ENCODE measurements at regions of chr10 and their contacts with region 1.

Region 1: DNA sequence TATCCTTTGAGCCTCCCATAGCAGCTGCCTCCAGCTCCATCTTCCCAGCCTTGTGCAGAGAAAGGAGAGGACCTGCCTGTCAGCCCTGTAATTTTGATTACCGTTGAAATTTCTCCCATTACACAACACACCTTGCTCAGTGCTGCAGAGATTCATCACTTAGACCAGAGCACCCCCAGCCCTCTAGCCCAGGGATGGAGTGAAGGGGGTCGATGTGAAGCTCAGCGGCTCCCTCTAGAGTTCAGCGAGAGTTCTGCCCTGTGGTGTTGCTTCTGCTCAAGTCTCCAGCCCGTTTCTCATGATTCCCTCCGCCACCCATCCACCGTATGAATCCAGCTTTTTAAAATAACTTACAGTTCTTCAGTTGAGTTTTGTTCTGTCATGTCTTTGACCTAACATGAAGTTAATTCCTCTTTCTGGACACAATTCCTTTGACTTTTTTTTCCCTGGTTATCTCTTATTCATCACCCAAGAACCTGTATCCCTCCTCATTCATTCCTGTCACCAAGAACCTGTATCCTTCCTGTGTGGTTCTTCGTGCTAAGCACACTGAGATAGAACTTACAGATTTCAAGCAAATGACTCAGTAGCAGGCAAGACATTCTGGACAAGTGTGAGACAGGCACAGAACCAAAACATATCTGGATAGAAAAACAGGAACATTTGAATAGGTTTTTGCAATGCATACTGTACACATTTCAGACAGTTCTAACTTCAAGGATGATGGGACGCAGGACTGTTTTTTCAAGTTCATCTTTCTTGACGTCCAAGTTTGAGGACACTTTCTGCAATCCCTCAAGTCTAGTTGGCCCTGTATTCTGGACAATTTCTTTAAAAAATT is 35.0 kb upstream of the ZNF32 start:
- DNase-seq: peak in 2 of 9 experiments; percentile 41 to 49
- ATAC-seq: peak; percentile 68
- H3K4me3 ChIP-seq: no peak overlapping the region
- H3K4me3 Mint-ChIP-seq: no peak overlapping the region
- H3K27ac ChIP-seq: no peak overlapping the region
- H3K27ac Mint-ChIP-seq: no peak overlapping the region
- H3K4me1 ChIP-seq: no peaks in the 10 kb centered on the region
- H3K4me1 Mint-ChIP-seq: peaks cover 1% of the 10 kb centered on the region
- H3K27me3 ChIP-seq: no peaks in the 10 kb centered on the region
- H3K27me3 Mint-ChIP-seq: peaks cover 25% of the 10 kb centered on the region
- CTCF ChIP-seq: peak; percentile 58

Region 2: DNA sequence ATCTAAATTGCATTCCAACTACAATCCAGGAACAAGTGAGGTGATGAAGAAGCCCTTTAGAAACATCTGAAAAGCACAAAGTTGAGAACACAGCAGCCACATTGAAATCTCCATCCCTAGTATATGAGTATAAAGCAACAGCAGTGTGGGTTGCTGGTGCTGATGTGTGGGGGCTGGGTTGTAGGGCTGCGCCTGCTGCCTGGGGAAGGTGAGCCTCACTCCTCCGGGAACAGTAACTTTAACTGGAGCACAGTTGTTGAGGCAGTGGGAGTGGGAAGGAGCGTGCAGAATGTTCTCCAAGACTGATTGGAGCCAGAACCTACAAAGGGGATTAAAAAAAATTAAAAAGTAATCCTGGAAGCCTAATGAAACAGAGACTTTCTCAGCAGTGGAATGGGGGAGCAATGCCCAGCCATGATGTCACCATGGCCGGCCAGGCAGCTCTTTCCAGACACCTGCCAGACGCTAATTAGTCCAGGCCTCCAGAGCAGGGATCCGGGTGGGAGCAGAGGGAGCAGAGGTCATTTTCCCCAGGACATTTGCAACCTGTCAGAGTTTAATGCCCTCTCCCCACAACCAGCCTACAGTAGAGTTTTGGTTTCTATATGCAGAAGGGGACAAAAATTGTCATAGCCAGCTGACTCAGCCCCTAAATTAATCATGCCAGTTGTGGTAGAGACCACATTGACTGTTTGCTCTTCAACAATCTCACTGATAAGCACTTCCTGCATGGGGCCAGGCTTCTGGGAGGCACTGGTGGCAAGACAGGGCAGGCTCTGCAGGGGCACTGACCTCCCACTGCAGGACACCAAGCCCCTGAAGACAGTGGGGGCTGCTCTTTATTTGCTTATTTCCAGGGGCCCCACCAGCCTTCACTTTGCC is 98.0 kb after region 1 on chr10:
- CTCF ChIA-PET with region 1: no interaction called
- POLR2A ChIA-PET with region 1: no interaction called
- intact Hi-C with region 1: no loop called
- DNase-seq: peak in 4 of 9 experiments; percentile 9 to 51 (median 22)
- ATAC-seq: no peak
- H3K4me3 ChIP-seq: no peak overlapping the region
- H3K4me3 Mint-ChIP-seq: no peak overlapping the region
- H3K27ac ChIP-seq: peak overlapping the region in 1 of 2 experiments; percentile 53
- H3K27ac Mint-ChIP-seq: no peak overlapping the region
- H3K4me1 ChIP-seq: peaks cover 17% of the 10 kb centered on the region
- H3K4me1 Mint-ChIP-seq: peaks cover 16% of the 10 kb centered on the region
- H3K27me3 ChIP-seq: no peaks in the 10 kb centered on the region
- H3K27me3 Mint-ChIP-seq: no peaks in the 10 kb centered on the region
- CTCF ChIP-seq: no peak

Region 3: DNA sequence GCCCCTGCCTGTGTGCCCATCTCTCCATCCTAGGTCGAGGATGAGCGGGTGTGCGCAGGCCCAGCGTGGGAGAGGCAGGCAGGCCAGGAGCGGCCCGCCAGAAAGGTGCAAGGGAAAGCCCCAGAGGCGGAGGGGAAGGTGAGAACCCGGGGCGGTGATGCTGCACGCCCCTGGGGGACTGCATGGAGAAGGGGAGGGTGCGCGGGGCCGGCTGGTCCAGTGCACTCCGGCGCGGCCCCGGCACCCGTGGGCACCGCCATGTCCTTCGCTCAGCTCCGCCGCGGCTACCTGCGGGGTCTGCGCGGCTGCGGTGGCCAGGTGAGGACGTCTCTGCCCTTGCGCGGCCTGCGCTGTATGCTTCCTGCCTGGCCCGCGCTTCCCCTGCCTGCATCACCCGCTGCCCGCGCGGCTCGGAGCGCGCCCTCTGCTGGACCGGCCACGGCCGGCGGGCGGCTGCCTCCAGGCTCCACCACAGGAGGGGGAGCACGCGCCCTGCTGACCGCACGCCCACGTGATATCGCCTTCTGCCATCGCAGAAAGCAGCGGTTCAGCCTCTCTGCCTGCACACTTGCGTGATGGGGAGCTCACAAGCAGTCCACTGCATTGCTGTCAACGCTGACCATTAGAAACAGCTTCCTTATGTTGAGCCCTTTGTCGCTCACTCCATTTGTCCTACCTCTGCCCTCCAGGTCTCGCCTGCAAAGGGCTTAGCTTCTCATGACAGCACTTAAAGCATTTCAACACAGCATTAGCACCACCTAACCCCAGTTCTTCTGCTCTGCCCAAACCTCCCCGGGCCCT is 627.3 kb after region 1 on chr10:
- CTCF ChIA-PET with region 1: interaction called, 6 read pairs
- POLR2A ChIA-PET with region 1: no interaction called
- intact Hi-C with region 1: loop called in 1 of 2 experiments (anchors 5 kb)
- DNase-seq: peak; percentile 33 to 87 (median 61)
- ATAC-seq: peak; percentile 76
- H3K4me3 ChIP-seq: peak overlapping the region; percentile 25 to 28
- H3K4me3 Mint-ChIP-seq: peak overlapping the region; percentile 55
- H3K27ac ChIP-seq: peak overlapping the region; percentile 51 to 70
- H3K27ac Mint-ChIP-seq: peak overlapping the region; percentile 64
- H3K4me1 ChIP-seq: peaks cover 7% of the 10 kb centered on the region
- H3K4me1 Mint-ChIP-seq: peaks cover 10% of the 10 kb centered on the region
- H3K27me3 ChIP-seq: no peaks in the 10 kb centered on the region
- H3K27me3 Mint-ChIP-seq: peaks cover 14% of the 10 kb centered on the region
- CTCF ChIP-seq: peak; percentile 32